ENCODE measurements at regions of chr15 and their contacts with region 1.

Region 1: DNA sequence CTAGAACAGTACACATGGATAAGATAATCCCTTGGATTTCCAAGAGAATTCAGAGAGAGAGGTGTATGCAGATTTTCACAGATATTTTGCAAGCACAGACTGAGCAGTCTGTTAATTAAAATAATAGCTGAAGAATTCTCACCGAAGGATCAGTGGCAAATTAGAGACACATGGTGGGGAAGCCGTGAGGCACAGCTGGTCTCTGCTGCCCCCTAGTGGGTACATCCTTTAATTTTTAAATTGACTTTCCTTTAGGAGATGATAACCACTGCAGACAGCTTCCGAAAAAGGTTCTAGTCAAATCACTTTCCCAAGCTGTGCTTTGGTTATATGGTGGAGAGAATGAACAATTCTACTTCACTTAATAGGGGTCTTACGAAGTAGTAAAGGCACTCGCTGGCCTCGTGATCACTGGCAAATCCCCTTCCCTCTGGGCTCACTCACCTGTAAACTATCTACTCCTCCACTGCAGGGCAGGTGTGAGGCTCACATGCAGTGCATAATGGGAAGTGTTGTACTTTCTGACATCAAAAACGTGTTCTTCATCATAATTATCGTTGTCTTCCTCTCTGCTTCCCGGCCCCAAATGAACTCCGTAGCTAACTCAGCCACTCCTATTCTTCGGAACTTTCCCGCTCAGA is 19.5 kb downstream of the MESD start:
- DNase-seq: peak; percentile 49 to 59
- H3K4me3 ChIP-seq: no peak overlapping the region
- H3K27ac ChIP-seq: no peak overlapping the region
- H3K4me1 ChIP-seq: peaks cover 32% of the 10 kb centered on the region
- H3K27me3 ChIP-seq: no peaks in the 10 kb centered on the region
- CTCF ChIP-seq: peak; percentile 95

Region 2: GRCh38 chr15:80455668-80456442 is 514.3 kb before region 1 on chr15:
- CTCF ChIA-PET with region 1: no interaction called
- POLR2A ChIA-PET with region 1: no interaction called
- intact Hi-C with region 1: loop called (anchors 1 kb)
- DNase-seq: peak; percentile 67 to 92
- H3K4me3 ChIP-seq: no peak overlapping the region
- H3K27ac ChIP-seq: peak overlapping the region; percentile 33; the same call in 1 of the 2 replicates
- H3K4me1 ChIP-seq: peaks cover 23% of the 10 kb centered on the region
- H3K27me3 ChIP-seq: no peaks in the 10 kb centered on the region
- CTCF ChIP-seq: peak; percentile 94

Region 3: GRCh38 chr15:80588801-80589200 is 381.3 kb before region 1 on chr15:
- CTCF ChIA-PET with region 1: no interaction called
- POLR2A ChIA-PET with region 1: no interaction called
- intact Hi-C with region 1: loop called (anchors 1 kb)
- DNase-seq: peak; percentile 34 to 99
- H3K4me3 ChIP-seq: no peak overlapping the region
- H3K27ac ChIP-seq: peak overlapping the region; percentile 90
- H3K4me1 ChIP-seq: peaks cover 51% of the 10 kb centered on the region
- H3K27me3 ChIP-seq: no peaks in the 10 kb centered on the region
- CTCF ChIP-seq: no peak

Region 4: DNA sequence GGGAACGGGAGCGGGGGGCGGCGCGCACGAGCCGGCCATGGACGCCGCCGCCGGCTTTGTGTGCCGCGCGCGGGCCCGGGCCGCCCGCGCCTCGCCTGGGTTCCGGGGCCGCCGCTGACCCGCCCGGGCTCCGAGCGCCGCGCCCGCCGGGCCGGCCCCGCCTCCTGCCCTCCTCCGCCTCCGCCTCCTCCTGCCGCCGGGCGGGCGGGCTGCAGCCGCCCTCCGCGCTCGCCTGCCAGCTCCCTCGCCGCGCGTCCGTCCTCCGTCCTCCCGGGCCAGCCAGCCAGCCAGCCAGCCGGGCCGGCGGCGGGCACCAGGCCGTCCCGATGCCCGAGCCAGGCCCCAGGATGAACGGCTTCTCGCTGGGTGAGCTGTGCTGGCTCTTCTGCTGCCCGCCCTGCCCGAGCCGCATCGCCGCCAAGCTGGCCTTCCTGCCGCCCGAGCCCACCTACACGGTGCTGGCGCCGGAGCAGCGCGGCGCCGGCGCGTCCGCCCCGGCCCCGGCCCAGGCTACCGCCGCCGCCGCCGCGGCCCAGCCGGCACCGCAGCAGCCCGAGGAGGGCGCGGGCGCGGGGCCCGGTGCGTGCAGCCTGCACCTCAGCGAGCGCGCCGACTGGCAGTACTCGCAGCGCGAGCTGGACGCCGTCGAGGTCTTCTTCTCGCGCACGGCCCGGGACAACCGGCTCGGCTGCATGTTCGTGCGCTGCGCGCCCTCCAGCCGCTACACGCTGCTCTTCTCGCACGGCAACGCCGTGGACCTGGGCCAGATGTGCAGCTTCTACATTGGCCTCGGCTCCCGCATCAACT is 274.8 kb before region 1 on chr15 and contains the start of gene ABHD17C:
- CTCF ChIA-PET with region 1: no interaction called
- POLR2A ChIA-PET with region 1: no interaction called
- intact Hi-C with region 1: loop called (anchors 5 kb)
- DNase-seq: peak in 1 of 2 experiments; percentile 72
- H3K4me3 ChIP-seq: peak within 1 kb of the TSS; percentile 99
- H3K27ac ChIP-seq: peak within 1 kb of the TSS; percentile 74
- H3K4me1 ChIP-seq: peaks cover 61% of the 10 kb centered on the region
- H3K27me3 ChIP-seq: no peaks in the 10 kb centered on the region
- CTCF ChIP-seq: no peak
- total RNA-seq, gene ABHD17C: 35.6 and 42.2 TPM in 2 replicates

Region 5: DNA sequence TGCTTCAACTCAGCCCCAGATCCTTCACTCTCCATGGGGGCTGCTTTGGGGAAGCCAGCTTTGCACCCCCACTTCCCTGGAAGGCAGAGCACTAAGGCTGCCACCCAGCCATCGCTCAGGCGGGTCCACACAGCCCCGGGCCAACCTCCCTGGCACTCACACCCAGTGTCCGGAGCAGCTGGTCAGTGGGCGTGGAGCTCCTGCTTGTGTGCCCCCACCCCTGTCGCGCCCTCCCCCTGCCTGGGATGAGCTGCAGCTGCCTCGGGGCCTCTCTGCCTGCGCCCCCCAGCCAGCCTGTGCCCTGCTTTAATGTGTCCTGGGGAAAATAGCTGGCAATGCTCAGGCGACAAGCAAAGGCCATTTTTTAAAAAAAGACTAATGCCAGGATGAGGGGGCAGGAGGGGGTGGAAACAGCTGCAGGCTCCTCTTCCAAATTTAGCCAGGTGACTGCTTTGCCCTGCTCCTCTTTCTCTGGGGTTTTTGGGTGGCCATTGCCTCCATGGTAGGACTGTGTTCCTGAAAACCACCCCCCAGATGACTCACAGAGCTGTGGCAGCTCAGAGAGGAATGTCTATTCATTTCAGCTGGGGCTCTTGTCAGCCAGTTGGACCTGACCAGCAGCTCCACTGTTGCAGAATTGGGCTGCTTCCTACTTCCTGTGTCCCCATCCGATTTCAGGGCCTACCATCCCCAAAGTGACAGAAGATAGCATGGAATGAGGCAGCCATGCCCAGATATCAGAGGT is 126.0 kb before region 1 on chr15:
- CTCF ChIA-PET with region 1: no interaction called
- POLR2A ChIA-PET with region 1: no interaction called
- intact Hi-C with region 1: loop called (anchors 5 kb)
- DNase-seq: peak; percentile 56 to 91
- H3K4me3 ChIP-seq: no peak overlapping the region
- H3K27ac ChIP-seq: peak overlapping the region; percentile 94
- H3K4me1 ChIP-seq: peaks cover 90% of the 10 kb centered on the region
- H3K27me3 ChIP-seq: no peaks in the 10 kb centered on the region
- CTCF ChIP-seq: no peak

Region 6: GRCh38 chr15:80915472-80915871 is 54.7 kb before region 1 on chr15:
- CTCF ChIA-PET with region 1: no interaction called
- POLR2A ChIA-PET with region 1: no interaction called
- intact Hi-C with region 1: loop called (anchors 5 kb)
- DNase-seq: no peak
- H3K4me3 ChIP-seq: no peak overlapping the region
- H3K27ac ChIP-seq: peak overlapping the region; percentile 67; the same call in 1 of the 2 replicates
- H3K4me1 ChIP-seq: peaks cover 17% of the 10 kb centered on the region
- H3K27me3 ChIP-seq: no peaks in the 10 kb centered on the region
- CTCF ChIP-seq: no peak

Region 7: DNA sequence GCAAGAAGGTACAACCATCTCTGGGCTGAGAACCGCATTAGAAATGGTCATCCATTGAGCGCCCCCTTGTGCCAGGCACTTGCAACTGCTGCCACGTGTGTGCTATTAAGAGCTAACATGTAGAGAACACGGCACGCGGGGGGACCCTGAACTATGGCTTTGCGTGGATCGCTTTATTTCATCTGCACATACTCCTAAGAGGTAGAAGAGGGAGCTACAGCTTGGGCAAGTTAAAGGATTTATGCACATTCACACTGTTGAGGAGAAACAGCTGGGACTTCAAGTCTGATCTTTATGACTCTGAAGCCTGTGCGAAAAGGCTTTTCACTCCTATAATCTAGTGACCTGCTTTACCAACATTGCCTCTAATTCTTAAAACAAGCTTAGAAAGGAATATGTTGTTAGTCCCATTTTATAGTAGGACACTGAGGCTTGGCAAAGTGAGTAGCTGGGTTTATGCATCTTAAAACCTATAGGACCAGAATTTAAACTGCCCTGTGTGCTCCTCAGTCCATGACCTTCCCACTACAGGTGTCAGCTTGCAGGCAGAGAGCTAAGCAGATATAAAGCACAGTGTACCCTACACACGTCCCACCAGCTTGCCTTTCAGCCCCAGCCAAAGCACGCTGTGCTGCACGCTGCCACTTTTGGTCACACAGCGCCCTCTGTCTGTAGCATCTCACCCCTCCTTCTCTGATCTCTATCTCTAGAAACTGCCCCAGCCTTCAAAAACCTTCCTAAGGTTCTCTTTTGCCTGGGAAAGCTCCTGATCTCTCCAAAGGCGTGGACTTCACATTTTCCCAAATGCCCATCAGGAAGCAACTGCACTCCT is 296.0 kb after region 1 on chr15:
- CTCF ChIA-PET with region 1: no interaction called
- POLR2A ChIA-PET with region 1: no interaction called
- intact Hi-C with region 1: loop called (anchors 2 kb)
- DNase-seq: peak; percentile 52 to 59
- H3K4me3 ChIP-seq: no peak overlapping the region
- H3K27ac ChIP-seq: no peak overlapping the region
- H3K4me1 ChIP-seq: no peaks in the 10 kb centered on the region
- H3K27me3 ChIP-seq: peaks cover 68% of the 10 kb centered on the region
- CTCF ChIP-seq: peak; percentile 81